Activated T-helper 1 cell treated with anti-CD3 and anti-CD28 coated beads, Interleukin-12 subunit alpha, Interleukin-12 subunit beta, Interleukin-2, Interleukin-4 antibody, amounts not matched to agents 30 ng/mL and 10 ng/mL and 1 ng/mL, durations not matched to agents 14 hours and 24 hours and 36 hours (primary cell): ENCODE measurements at regions of chrX and their contacts with region 1.

Region 1: GRCh38 chrX:71068049-71068763 is at the start of gene SNX12:
- DNase-seq: peak; percentile 85
- H3K4me3 Mint-ChIP-seq: peak within 1 kb of the TSS; percentile 98
- H3K27ac Mint-ChIP-seq: peak within 1 kb of the TSS; percentile 96
- H3K4me1 Mint-ChIP-seq: peaks cover 22% of the 10 kb centered on the region
- H3K27me3 Mint-ChIP-seq: peaks cover 7% of the 10 kb centered on the region
- total RNA-seq, gene SNX12: 47.9 and 51.9 TPM in 2 replicates

Region 2: GRCh38 chrX:71095543-71095911 is 27.3 kb after region 1 on chrX and contains the start of gene FOXO4:
- intact Hi-C with region 1: loop called (anchors 1 kb)
- DNase-seq: peak; percentile 81
- H3K4me3 Mint-ChIP-seq: peak within 1 kb of the TSS; percentile 93
- H3K27ac Mint-ChIP-seq: peak within 1 kb of the TSS; percentile 91
- H3K4me1 Mint-ChIP-seq: peaks cover 33% of the 10 kb centered on the region
- H3K27me3 Mint-ChIP-seq: peaks cover 8% of the 10 kb centered on the region
- total RNA-seq, gene FOXO4: 10.7 and 11.9 TPM in 2 replicates

Region 3: GRCh38 chrX:71118032-71118984 is 50.1 kb after region 1 on chrX and contains the start of gene MED12:
- intact Hi-C with region 1: loop called (anchors 2 kb)
- DNase-seq: peak; percentile 76
- H3K4me3 Mint-ChIP-seq: peak within 1 kb of the TSS; percentile 85
- H3K27ac Mint-ChIP-seq: peak within 1 kb of the TSS; percentile 82
- H3K4me1 Mint-ChIP-seq: peaks cover 20% of the 10 kb centered on the region
- H3K27me3 Mint-ChIP-seq: no peaks in the 10 kb centered on the region
- total RNA-seq, gene MED12: 59.9 and 65.4 TPM in 2 replicates

Region 4: DNA sequence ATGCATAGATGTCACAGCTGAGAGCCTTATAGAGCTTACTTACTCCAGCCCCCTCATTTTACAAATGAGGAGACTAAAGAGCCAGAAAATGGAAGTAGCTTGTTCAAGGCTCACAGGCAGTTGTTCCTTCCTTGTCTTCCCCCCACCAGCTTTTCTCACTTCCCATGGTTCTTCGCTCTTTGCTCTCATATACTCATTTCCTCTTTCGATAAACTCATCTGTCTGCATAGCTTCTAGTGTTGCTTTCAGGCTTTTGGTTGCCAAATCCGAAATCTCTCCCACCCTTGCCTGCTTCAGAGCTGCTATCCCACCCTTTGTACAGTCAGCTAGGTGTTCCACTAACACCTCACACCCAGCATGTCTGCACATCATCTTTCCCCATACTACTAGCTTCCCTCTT is 129.9 kb after region 1 on chrX:
- intact Hi-C with region 1: loop called (anchors 5 kb)
- DNase-seq: no peak
- H3K4me3 Mint-ChIP-seq: peak overlapping the region; percentile 94
- H3K27ac Mint-ChIP-seq: peak overlapping the region; percentile 92
- H3K4me1 Mint-ChIP-seq: peaks cover 21% of the 10 kb centered on the region
- H3K27me3 Mint-ChIP-seq: no peaks in the 10 kb centered on the region

Region 5: GRCh38 chrX:71283403-71284143 is 215.4 kb after region 1 on chrX and contains the start of gene NONO:
- intact Hi-C with region 1: loop called (anchors 1 kb)
- DNase-seq: peak; percentile 84
- H3K4me3 Mint-ChIP-seq: peak within 1 kb of the TSS; percentile 94
- H3K27ac Mint-ChIP-seq: peak within 1 kb of the TSS; percentile 98
- H3K4me1 Mint-ChIP-seq: peaks cover 15% of the 10 kb centered on the region
- H3K27me3 Mint-ChIP-seq: no peaks in the 10 kb centered on the region
- total RNA-seq, gene NONO: 512 and 546 TPM in 2 replicates